Mammary epithelial cell (primary cell): ENCODE measurements at regions of chr11 and their contacts with region 1.

Region 1: GRCh38 chr11:27209562-27210005 is 153.4 kb downstream of the CCDC34 start:
- DNase-seq: peak; percentile 98
- H3K4me3 ChIP-seq: no peak overlapping the region
- H3K27ac ChIP-seq: peak overlapping the region; percentile 67
- H3K4me1 ChIP-seq: peaks cover 28% of the 10 kb centered on the region
- H3K27me3 ChIP-seq: no peaks in the 10 kb centered on the region
- CTCF ChIP-seq: no peak

Region 2: GRCh38 chr11:27118949-27119348 is 90.6 kb before region 1 on chr11:
- CTCF ChIA-PET with region 1: interaction called, 22 read pairs
- dilution Hi-C with region 1: no loop called
- in situ Hi-C with region 1: no loop called
- intact Hi-C with region 1: no loop called
- DNase-seq: no peak
- H3K4me3 ChIP-seq: no peak overlapping the region
- H3K27ac ChIP-seq: no peak overlapping the region
- H3K4me1 ChIP-seq: no peaks in the 10 kb centered on the region
- H3K27me3 ChIP-seq: no peaks in the 10 kb centered on the region
- CTCF ChIP-seq: no peak

Region 3: GRCh38 chr11:27193434-27194225 is 16.0 kb before region 1 on chr11:
- CTCF ChIA-PET with region 1: no interaction called
- dilution Hi-C with region 1: no loop called
- in situ Hi-C with region 1: no loop called
- intact Hi-C with region 1: no loop called
- DNase-seq: no peak
- H3K4me3 ChIP-seq: no peak overlapping the region
- H3K27ac ChIP-seq: no peak overlapping the region
- H3K4me1 ChIP-seq: no peaks in the 10 kb centered on the region
- H3K27me3 ChIP-seq: no peaks in the 10 kb centered on the region
- CTCF ChIP-seq: no peak